Activated CD8-positive, alpha-beta T cell treated with anti-CD3 and anti-CD28 coated beads, Interleukin-2, amount 10 ng/mL, durations not matched to agents 7 days and 5 days (primary cell): ENCODE measurements at regions of chrX and their contacts with region 1.

Region 1: GRCh38 chrX:65697915-65698796 is 30.7 kb downstream of the MSN start:
- DNase-seq: peak; percentile 85
- ATAC-seq: peak; percentile 74
- H3K4me3 Mint-ChIP-seq: peak overlapping the region; percentile 76
- H3K27ac Mint-ChIP-seq: peak overlapping the region; percentile 95
- H3K4me1 Mint-ChIP-seq: peaks cover 86% of the 10 kb centered on the region
- H3K27me3 Mint-ChIP-seq: no peaks in the 10 kb centered on the region

Region 2: DNA sequence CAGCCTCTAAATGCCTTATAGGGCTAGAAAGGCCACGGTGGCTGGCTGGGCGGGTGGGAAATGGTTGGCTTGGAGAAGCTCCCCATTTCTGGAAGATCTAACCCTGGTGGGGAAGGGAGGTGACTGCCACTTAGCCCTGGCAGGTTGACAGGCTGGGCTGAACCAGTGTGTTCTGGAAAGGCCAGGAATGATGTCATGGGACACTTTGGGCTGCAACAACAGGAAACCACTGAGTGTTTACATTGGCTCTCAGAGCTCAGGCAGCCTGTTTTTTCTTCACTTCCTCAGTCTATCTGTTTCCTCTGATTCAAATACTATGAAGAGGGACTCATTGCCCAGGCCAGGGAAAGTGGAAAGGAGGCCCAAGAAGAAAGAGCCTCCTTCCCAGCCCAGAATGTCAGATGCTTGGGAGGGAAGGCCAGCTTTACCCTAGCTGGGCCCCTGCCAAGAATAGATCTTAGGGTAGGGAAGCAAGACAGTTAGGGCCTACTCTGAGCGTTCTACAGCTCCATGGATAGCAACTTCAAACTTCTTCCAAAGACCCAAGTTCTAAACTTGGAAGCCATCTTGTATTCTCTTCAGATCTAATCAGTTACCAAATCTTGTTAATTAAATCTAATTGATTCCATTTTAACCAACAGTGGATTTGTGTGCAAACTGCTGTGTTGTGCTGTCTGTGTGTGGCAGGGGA is 96.5 kb before region 1 on chrX:
- CTCF ChIA-PET with region 1: interaction called, 14 read pairs
- POLR2A ChIA-PET with region 1: interaction called, 11 read pairs
- DNase-seq: peak; percentile 64
- ATAC-seq: peak; percentile 71
- H3K4me3 Mint-ChIP-seq: peak overlapping the region; percentile 31
- H3K27ac Mint-ChIP-seq: peak overlapping the region; percentile 92
- H3K4me1 Mint-ChIP-seq: peaks cover 67% of the 10 kb centered on the region
- H3K27me3 Mint-ChIP-seq: no peaks in the 10 kb centered on the region

Region 3: GRCh38 chrX:65667503-65668376 is 30.4 kb before region 1 on chrX and contains the start of gene MSN:
- CTCF ChIA-PET with region 1: interaction called, 18 read pairs
- POLR2A ChIA-PET with region 1: interaction called, 20 read pairs
- DNase-seq: peak; percentile 84
- ATAC-seq: peak; percentile 83
- H3K4me3 Mint-ChIP-seq: peak within 1 kb of the TSS; percentile 95
- H3K27ac Mint-ChIP-seq: peak within 1 kb of the TSS; percentile 93
- H3K4me1 Mint-ChIP-seq: peaks cover 33% of the 10 kb centered on the region
- H3K27me3 Mint-ChIP-seq: no peaks in the 10 kb centered on the region
- total RNA-seq, gene MSN: 622 to 627 TPM

Region 4: GRCh38 chrX:65674204-65674893 is 23.8 kb before region 1 on chrX:
- CTCF ChIA-PET with region 1: interaction called, 18 read pairs
- POLR2A ChIA-PET with region 1: interaction called, 20 read pairs
- DNase-seq: peak; percentile 51
- ATAC-seq: peak; percentile 57
- H3K4me3 Mint-ChIP-seq: peak overlapping the region; percentile 84
- H3K27ac Mint-ChIP-seq: peak overlapping the region; percentile 81
- H3K4me1 Mint-ChIP-seq: peaks cover 73% of the 10 kb centered on the region
- H3K27me3 Mint-ChIP-seq: no peaks in the 10 kb centered on the region

Region 5: GRCh38 chrX:65723706-65724105 is 25.6 kb after region 1 on chrX:
- CTCF ChIA-PET with region 1: interaction called, 6 read pairs
- POLR2A ChIA-PET with region 1: interaction called, 14 read pairs
- DNase-seq: peak; percentile 64
- ATAC-seq: peak; percentile 85
- H3K4me3 Mint-ChIP-seq: peak overlapping the region; percentile 51
- H3K27ac Mint-ChIP-seq: peak overlapping the region; percentile 92
- H3K4me1 Mint-ChIP-seq: peaks cover 91% of the 10 kb centered on the region
- H3K27me3 Mint-ChIP-seq: no peaks in the 10 kb centered on the region

Region 6: GRCh38 chrX:65976161-65976560 is 278.0 kb after region 1 on chrX:
- CTCF ChIA-PET with region 1: no interaction called
- POLR2A ChIA-PET with region 1: no interaction called
- DNase-seq: no peak
- ATAC-seq: no peak
- H3K4me3 Mint-ChIP-seq: no peak overlapping the region
- H3K27ac Mint-ChIP-seq: no peak overlapping the region
- H3K4me1 Mint-ChIP-seq: no peaks in the 10 kb centered on the region
- H3K27me3 Mint-ChIP-seq: no peaks in the 10 kb centered on the region